Caco-2 (cell line): ENCODE measurements at regions of chr5 and their contacts with region 1.

Region 1: DNA sequence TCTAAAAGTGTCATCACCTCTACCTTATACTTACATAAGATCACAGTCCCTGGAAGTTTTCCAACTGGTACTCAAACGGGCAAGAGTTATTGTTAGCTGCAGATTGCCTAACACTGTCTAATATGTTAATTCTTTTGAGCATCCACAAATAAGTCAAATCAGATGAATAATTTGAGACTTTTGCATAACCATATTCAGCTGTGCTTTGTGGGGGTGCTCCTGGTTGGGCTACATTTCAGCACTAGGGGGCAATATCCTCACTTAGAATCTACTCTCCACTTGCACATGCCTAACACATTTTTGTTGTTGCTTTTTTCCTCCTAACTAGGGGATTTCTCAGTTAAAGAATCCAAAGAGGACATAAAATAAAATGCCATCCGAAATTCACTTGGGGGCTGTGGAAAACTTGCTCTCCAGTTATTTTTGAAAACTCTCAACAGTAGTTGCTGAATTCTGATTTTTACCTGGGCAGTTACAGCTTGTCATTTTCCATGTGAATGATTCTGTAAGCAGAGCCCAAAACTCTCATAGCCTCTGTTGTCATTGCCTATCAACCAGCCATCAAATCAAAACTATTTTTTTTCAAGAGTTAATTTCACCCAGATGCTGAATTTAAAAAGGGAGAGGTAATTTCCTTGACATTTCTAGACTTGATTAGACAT is 71.5 kb downstream of the TRIM36 start:
- DNase-seq: peak in 1 of 2 experiments; percentile 48
- H3K4me3 ChIP-seq: no peak overlapping the region
- H3K4me3 Mint-ChIP-seq: no peak overlapping the region
- H3K27ac Mint-ChIP-seq: no peak overlapping the region
- H3K4me1 ChIP-seq: no peaks in the 10 kb centered on the region
- H3K4me1 Mint-ChIP-seq: no peaks in the 10 kb centered on the region
- H3K27me3 ChIP-seq: no peaks in the 10 kb centered on the region
- H3K27me3 Mint-ChIP-seq: peaks cover 8% of the 10 kb centered on the region
- CTCF ChIP-seq: peak; percentile 63 to 86

Region 2: DNA sequence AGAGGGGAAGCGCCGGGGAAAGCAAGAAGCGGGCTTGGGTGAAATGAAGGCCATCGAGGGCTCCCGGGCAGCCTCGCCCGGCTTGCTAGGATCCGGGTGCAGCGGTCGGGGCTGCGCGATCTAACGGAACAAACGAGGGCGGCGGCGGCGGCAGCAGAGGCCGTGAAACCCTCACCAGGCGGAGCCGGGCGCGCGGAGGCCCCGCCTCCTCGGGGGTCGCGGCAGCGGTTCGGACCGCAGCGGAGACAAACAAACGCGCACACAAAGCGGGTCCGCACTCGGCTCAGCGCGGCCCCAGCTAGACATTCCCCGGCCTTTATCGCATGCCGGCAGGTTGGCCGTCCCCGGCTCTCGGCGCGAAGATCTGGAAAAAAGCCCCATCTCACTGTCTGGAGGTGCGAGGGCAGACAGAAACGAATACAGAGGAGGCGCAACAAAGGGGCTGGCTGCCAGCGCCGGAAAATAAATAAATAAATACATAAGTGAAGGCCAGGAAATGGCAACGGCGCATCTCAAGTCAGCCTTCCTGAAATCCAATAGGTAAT is 82.1 kb after region 1 on chr5:
- CTCF ChIA-PET with region 1: no interaction called
- POLR2A ChIA-PET with region 1: no interaction called
- intact Hi-C with region 1: loop called (anchors 1 kb)
- DNase-seq: peak in 1 of 2 experiments; percentile 11
- H3K4me3 ChIP-seq: peak overlapping the region; percentile 31
- H3K4me3 Mint-ChIP-seq: peak overlapping the region; percentile 83
- H3K27ac Mint-ChIP-seq: no peak overlapping the region
- H3K4me1 ChIP-seq: peaks cover 6% of the 10 kb centered on the region
- H3K4me1 Mint-ChIP-seq: peaks cover 8% of the 10 kb centered on the region
- H3K27me3 ChIP-seq: peaks cover 6% of the 10 kb centered on the region; the same call in 1 of the 2 replicates
- H3K27me3 Mint-ChIP-seq: peaks cover 44% of the 10 kb centered on the region
- CTCF ChIP-seq: no peak

Region 3: DNA sequence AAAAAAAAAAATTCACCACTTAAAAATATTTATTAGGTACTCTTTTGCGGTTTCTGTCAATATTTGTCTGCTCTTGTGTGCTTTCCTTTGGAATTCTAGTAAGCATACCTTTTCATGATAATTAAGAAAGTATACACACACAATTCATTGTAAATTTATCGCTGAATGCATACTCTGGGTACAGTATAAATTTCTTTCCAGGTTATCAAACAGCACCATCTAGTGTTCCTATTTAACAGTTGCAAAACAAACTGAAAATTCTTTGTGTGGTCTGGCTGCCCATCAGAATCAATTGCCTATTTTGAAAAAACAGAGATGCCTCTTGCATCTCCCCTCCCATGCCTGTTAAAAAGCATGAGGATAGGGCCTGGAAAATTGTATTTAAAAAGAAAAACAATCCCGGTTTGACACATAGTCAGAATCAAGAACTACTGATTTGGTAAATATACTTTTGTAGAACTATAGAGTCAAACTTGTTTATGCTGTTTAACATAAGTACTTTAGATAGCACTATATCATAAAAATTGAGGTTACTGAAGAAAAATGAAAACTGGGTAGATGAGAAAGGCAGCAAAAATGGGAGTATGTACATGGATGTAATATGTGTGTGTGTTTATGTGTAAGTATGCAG is 148.3 kb after region 1 on chr5:
- CTCF ChIA-PET with region 1: no interaction called
- POLR2A ChIA-PET with region 1: no interaction called
- intact Hi-C with region 1: loop called (anchors 1 kb)
- DNase-seq: peak in 1 of 2 experiments; percentile 15
- H3K4me3 ChIP-seq: no peak overlapping the region
- H3K4me3 Mint-ChIP-seq: no peak overlapping the region
- H3K27ac Mint-ChIP-seq: no peak overlapping the region
- H3K4me1 ChIP-seq: no peaks in the 10 kb centered on the region
- H3K4me1 Mint-ChIP-seq: peaks cover 6% of the 10 kb centered on the region
- H3K27me3 ChIP-seq: no peaks in the 10 kb centered on the region
- H3K27me3 Mint-ChIP-seq: no peaks in the 10 kb centered on the region
- CTCF ChIP-seq: peak; percentile 66 to 69

Region 4: GRCh38 chr5:115586601-115587048 is 488.5 kb after region 1 on chr5:
- CTCF ChIA-PET with region 1: no interaction called
- POLR2A ChIA-PET with region 1: no interaction called
- intact Hi-C with region 1: loop called (anchors 2 kb)
- DNase-seq: peak in 1 of 2 experiments; percentile 5
- H3K4me3 ChIP-seq: no peak overlapping the region
- H3K4me3 Mint-ChIP-seq: no peak overlapping the region
- H3K27ac Mint-ChIP-seq: no peak overlapping the region
- H3K4me1 ChIP-seq: no peaks in the 10 kb centered on the region
- H3K4me1 Mint-ChIP-seq: no peaks in the 10 kb centered on the region
- H3K27me3 ChIP-seq: no peaks in the 10 kb centered on the region
- H3K27me3 Mint-ChIP-seq: no peaks in the 10 kb centered on the region
- CTCF ChIP-seq: peak; percentile 38 to 60